ENCODE measurements at regions of chr2 and their contacts with region 1.

Region 1: GRCh38 chr2:23926750-23927571 is at the start of gene ATAD2B:
- H3K4me3 ChIP-seq: peak within 1 kb of the TSS; percentile 98
- H3K27ac ChIP-seq: peak within 1 kb of the TSS; percentile 86
- H3K4me1 ChIP-seq: peaks cover 9% of the 10 kb centered on the region
- CTCF ChIP-seq: peak; percentile 89

Region 2: GRCh38 chr2:23628926-23629771 is 297.8 kb before region 1 on chr2:
- CTCF ChIA-PET with region 1: no interaction called
- POLR2A ChIA-PET with region 1: no interaction called
- H3K4me3 ChIP-seq: no peak overlapping the region
- H3K27ac ChIP-seq: no peak overlapping the region
- H3K4me1 ChIP-seq: no peaks in the 10 kb centered on the region
- CTCF ChIP-seq: no peak

Region 3: DNA sequence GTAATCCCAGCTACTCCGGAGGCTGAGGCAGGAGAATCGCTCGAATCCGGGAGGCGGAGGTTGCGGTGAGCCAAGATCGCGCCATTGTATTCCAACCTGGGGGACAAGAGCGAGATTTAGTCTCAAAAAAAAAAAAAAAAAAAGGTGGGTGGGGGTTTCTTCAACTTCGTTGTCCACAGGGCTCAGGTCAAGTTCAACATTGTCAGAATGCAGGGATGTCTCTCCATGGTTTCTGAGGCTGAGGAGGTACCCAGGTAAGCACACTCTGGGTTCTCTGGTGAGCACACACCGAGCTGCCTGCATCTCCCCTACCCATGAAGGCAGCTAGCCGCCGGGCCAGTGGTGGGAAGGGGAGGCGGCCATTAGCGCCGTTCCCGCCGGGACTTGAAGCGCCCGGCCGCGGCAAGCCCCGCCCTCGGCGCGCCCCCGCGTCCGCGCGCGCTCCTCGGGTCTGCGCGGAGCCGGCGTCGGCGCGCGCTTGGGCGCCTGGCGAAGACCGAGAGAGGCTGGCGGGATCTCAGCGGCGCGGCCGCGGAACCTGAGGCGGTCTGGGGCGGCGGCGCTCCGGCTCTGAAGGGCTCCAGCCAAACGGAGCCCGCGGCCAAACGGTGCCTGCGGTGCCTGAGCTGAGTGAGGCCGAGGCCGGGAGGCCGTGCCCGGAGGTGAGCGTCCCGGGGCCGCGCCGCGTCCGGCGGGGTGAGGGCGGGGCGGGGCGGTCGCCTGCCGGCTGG is 13.2 kb after region 1 on chr2 and contains the start of gene UBXN2A:
- CTCF ChIA-PET with region 1: interaction called, 12 read pairs
- POLR2A ChIA-PET with region 1: interaction called, 68 read pairs
- H3K4me3 ChIP-seq: peak within 1 kb of the TSS; percentile 88
- H3K27ac ChIP-seq: peak within 1 kb of the TSS; percentile 86
- H3K4me1 ChIP-seq: peaks cover 12% of the 10 kb centered on the region
- CTCF ChIP-seq: 0 out of 2 replicates have a peak, but pooled peaks have one; percentile 11

Region 4: GRCh38 chr2:24046930-24047702 is 120.2 kb after region 1 on chr2 and contains the start of gene WDCP:
- CTCF ChIA-PET with region 1: interaction called, 8 read pairs
- POLR2A ChIA-PET with region 1: interaction called, 26 read pairs
- H3K4me3 ChIP-seq: peak within 1 kb of the TSS; percentile 91
- H3K27ac ChIP-seq: peak within 1 kb of the TSS; percentile 66
- H3K4me1 ChIP-seq: peaks cover 9% of the 10 kb centered on the region; the same call in 1 of the 2 replicates
- CTCF ChIP-seq: peak; percentile 14; the same call in 1 of the 2 replicates

Region 5: DNA sequence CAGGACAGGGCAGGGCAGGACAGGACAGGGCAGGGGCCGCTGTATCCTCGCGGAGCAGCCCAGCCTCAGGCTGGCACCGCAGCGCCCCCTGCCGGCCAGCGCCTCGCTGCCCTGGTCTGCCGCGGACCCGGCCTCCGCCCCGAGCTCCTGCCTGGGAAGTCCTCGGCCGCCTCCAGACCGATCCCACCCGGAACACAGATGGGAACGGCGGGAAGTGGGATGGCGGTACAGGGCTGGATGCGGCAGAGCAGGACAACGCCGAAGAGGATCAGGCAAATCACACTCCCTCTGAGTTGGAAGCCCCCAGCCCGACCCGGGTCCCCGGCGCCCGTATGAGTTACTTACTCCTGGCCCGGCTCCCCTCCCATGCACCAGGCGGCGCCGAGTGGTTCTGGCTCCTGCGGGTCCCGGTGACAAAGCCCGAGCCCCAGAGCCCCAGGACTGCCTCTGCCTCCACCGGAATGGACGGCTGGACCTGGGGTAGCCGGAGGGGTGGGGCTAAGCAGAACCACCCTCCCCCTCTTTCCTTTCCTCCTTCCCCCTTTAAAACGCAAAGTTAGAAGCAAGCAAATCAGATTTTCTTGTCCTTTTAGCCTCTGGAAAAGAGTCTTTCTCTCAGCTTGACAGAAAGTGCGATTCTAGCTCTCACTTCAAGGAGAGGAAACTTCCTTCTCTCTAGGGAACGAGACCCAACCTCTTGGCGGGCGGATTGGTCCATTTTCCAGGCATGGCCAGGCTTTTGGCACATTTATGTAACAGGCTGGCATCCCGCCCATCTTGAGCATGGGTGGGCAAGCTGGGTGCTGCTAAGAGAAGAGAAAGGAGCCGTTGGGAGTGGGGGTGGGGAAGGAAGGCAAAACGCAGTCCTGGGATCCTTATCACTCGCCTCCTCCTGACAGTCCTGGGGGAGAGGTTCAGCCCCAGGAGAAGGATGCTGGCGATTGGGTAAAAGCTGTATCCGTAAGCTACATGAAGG is 157.7 kb after region 1 on chr2 and contains the start of gene TP53I3:
- CTCF ChIA-PET with region 1: interaction called, 11 read pairs
- POLR2A ChIA-PET with region 1: interaction called, 13 read pairs
- H3K4me3 ChIP-seq: peak within 1 kb of the TSS; percentile 68
- H3K27ac ChIP-seq: peak within 1 kb of the TSS; percentile 79
- H3K4me1 ChIP-seq: no peaks in the 10 kb centered on the region
- CTCF ChIP-seq: peak; percentile 99

Measured in HEK293 (cell line).